ENCODE measurements at regions of chr12 and their contacts with region 1.

Region 1: GRCh38 chr12:121678716-121679580 is 9.5 kb upstream of the MORN3 start:
- DNase-seq: no peak
- H3K4me3 ChIP-seq: no peak overlapping the region
- H3K27ac ChIP-seq: peak overlapping the region in 50 of 59 donors; percentile 13 to 85 (median 60)
- H3K27me3 ChIP-seq: no peaks in the 10 kb centered on the region
- CTCF ChIP-seq: no peak

Region 2: DNA sequence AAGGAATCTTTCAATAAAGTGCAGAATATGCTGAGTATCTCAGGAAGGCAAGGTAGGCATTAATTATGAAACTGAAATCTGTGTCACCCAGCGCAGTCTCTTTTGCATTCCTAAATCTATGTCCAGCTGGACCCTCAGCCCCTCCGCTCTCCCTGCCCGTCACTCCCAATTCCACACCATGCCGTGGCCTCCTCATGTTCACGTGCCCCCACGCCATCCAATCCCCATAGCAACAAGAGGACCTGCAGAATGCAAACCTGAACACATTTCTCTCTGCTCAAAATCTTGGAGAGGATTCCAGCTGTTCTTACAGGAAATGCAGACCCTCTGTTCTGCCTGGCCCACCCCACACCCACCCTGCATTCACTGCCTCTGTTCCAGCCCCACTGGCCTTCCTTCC is 133.5 kb before region 1 on chr12:
- intact Hi-C with region 1: loop called in 1 of 2 experiments (anchors 5 kb)
- DNase-seq: no peak
- H3K4me3 ChIP-seq: no peak overlapping the region
- H3K27ac ChIP-seq: no peak overlapping the region
- H3K27me3 ChIP-seq: no peaks in the 10 kb centered on the region
- CTCF ChIP-seq: no peak

Region 3: DNA sequence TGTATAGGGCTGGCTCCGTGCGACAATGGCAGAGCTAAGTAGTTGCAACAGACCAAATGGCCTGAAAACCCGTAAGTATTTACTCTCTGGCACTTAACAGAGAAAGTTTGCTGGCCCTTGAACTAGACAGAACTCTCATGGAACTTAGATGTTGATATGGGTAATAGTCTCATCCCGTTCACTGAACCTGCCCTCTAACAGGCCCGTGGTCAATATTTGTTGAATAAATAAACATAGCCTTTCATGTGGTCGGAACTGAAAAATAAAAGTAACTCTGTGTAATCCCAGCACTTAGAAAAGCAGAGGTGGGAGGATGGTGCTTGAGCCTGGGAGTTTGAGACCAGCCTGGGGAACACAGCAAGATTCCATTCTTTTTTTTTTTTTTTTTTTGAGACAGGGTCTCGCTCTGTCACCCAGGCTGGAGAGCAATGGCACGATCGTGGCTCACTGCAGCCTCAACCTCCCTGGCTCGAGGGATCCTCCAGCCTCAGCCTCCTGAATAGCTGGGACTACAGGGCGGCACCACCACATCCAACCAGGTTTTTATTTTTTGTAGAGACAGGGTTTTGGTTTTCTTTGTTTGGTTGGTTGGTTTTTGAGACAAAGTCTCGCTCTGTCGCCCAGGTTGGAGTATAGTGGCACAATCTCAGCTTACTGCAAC is 127.8 kb before region 1 on chr12:
- intact Hi-C with region 1: loop called (anchors 1 to 5 kb)
- DNase-seq: no peak
- H3K4me3 ChIP-seq: no peak overlapping the region
- H3K27ac ChIP-seq: no peak overlapping the region
- H3K27me3 ChIP-seq: no peaks in the 10 kb centered on the region
- CTCF ChIP-seq: no peak

Region 4: DNA sequence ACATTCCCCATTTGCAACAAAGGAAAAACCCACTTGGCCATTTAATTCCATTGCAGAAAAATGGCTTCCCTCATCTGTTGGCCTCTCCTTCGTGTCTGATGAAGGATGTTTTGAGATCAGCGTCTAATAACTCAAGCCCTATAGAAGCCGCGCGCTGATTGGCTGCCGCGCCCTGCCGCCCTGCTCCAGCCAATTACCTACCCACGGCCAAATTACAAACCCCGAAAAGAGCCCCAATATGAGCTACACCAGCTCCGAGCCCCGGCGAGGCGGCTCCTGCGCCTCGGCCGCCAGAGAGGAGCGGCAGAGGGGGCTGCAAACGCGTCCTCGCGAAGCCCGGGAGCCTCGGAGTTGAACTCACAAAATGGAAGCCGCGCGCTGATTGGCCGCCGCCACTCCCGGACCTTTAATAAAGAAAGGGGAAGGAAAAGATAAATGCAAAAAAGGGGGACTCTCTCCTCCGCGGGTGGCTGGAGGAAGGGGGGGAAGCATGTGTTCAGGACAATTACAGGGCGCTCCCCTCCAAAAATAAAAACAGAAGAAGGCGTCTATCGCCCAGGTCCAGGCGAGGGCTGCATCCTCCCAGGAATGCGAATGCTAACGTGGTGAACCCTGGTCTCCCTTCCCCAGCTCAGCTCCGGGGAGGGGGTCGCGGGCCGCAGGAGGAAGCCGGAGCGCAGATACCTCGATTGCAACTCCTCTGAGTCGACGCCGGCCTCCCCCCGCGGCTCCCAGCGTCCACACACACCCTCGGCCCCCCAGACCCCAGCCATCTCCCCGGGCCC is 124.1 kb after region 1 on chr12:
- intact Hi-C with region 1: no loop called
- DNase-seq: peak; percentile 89 to 98 (median 94)
- H3K4me3 ChIP-seq: peak overlapping the region; percentile 53 to 92 (median 77)
- H3K27ac ChIP-seq: peak overlapping the region; percentile 99 to 100 (median 100)
- H3K27me3 ChIP-seq: no peaks in the 10 kb centered on the region
- CTCF ChIP-seq: peak in 7 of 56 donors; percentile 5 to 21 (median 15)

Measured in dorsolateral prefrontal cortex (tissue), 120 donors.